ENCODE measurements at regions of chr15 and their contacts with region 1.

Region 1: DNA sequence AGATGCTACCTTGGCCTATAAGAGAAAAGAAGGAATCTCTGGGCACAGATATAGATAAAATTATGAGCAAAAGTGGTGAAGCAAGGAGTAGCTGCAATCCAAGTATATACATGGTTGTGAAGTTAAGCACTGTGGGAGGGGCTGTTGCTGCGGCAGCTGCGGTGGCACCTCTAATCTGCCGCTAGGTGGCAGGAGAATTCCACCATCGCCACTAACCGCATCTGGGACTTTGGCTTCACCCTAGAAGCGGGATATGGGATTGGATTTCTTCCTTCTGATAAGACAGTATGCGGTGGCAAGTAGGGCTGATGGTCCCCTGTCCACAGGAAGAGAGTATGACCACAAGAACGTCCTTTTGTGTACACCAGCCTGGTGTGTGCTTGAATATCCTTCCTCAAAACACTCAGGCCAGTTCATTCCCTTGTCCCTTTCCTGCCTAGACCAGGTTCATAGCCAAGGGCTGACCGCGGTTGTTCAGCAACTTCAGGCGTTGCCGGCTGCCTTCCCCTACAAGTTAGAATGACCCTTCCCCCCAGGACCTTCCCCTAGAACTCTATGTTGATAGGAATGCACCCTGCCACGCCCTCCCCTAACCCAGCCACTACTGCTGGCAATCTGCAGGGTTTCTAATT is 5.1 kb downstream of the MAGEL2 start:
- DNase-seq: peak; percentile 53

Region 2: GRCh38 chr15:23538648-23539047 is 103.9 kb before region 1 on chr15:
- in situ Hi-C with region 1: no loop called
- DNase-seq: no peak

Region 3: GRCh38 chr15:23857028-23857641 is 214.6 kb after region 1 on chr15:
- in situ Hi-C with region 1: loop called (anchors 25 kb)
- DNase-seq: peak; percentile 56